ENCODE measurements at regions of chr16 and their contacts with region 1.

Region 1: GRCh38 chr16:1308977-1309885 is at the start of gene UBE2I:
- DNase-seq: peak; percentile 98
- H3K4me3 Mint-ChIP-seq: peak within 1 kb of the TSS; percentile 92
- H3K27ac Mint-ChIP-seq: peak within 1 kb of the TSS; percentile 99
- H3K4me1 Mint-ChIP-seq: peaks cover 12% of the 10 kb centered on the region
- H3K27me3 Mint-ChIP-seq: no peaks in the 10 kb centered on the region
- total RNA-seq, gene UBE2I: 264 and 265 TPM in 2 replicates

Region 2: GRCh38 chr16:1342526-1343427 is 33.5 kb after region 1 on chr16:
- intact Hi-C with region 1: no loop called
- DNase-seq: peak; percentile 91
- H3K4me3 Mint-ChIP-seq: peak overlapping the region; percentile 42
- H3K27ac Mint-ChIP-seq: no peak overlapping the region
- H3K4me1 Mint-ChIP-seq: peaks cover 12% of the 10 kb centered on the region
- H3K27me3 Mint-ChIP-seq: no peaks in the 10 kb centered on the region

Region 3: DNA sequence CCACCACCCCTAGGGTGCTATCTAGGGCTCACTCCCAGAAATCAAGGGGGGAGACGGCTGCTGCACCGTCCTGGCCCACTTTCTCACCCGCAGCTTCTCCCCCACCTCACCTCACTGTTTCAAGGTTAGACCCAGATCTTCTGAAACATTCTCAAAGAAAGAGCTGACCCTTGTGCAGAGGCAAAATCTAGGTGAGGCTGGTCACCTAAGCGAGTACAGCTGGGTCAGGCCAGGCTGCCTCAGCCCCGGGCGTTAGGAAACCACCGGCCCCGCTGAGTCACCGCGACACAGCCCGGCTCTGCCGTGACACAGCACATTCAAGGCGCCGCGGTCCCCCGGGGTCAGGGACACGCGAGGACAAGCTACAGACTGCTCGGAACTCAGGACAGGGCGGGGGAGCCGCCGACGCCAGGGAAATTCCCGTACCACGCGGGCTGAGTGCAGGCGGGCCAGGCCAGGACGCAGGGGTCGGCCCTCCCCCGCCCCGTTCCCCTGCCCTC is 69.6 kb after region 1 on chr16:
- intact Hi-C with region 1: loop called (anchors 2 kb)
- DNase-seq: peak; percentile 56
- H3K4me3 Mint-ChIP-seq: peak overlapping the region; percentile 88
- H3K27ac Mint-ChIP-seq: peak overlapping the region; percentile 88
- H3K4me1 Mint-ChIP-seq: peaks cover 12% of the 10 kb centered on the region
- H3K27me3 Mint-ChIP-seq: no peaks in the 10 kb centered on the region

Region 4: GRCh38 chr16:1428511-1428910 is 119.3 kb after region 1 on chr16:
- intact Hi-C with region 1: loop called (anchors 10 kb)
- DNase-seq: peak; percentile 36
- H3K4me3 Mint-ChIP-seq: no peak overlapping the region
- H3K27ac Mint-ChIP-seq: no peak overlapping the region
- H3K4me1 Mint-ChIP-seq: no peaks in the 10 kb centered on the region
- H3K27me3 Mint-ChIP-seq: no peaks in the 10 kb centered on the region

Region 5: DNA sequence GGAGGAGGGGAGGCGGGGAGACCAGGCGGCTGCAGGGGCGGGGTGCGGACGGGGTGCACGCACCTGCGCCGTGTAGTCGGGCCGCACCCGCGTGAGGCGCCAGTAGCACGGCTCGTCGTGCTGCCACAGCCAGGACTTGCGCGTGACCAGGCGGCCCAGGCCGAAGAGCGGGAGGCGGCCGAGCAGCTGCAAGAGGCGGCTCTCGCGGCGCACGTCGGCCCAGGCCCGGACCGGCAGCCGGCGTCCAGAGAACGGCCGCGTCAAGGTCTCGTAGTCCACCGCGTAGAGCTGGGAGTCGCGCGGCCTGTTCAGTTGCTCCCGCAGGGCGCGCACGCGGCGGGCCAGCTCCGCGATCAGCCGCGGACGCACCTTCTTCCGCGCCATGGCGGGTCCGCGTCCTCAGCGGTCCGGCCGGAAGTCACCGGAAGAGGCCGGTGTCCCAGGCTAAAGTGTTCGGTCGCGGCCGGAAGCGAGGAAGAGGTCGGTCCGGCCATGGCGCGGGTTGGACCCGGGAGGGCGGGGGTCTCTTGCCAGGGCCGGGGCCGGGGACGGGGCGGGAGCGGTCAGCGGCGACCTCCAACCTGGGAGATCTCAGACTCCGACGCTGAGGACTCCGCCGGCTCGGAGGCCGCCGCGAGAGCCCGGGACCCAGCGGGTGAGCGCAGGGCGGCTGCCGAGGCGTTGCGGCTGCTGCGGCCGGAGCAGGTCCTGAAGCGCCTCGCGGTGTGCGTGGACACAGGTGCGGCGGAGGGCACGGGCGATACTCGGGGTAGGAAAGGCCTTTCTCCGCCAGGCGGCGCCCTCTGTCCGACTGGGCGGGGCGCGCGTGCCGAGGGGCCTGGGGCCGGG is 463.7 kb after region 1 on chr16 and contains the starts of genes EME2 and MRPS34:
- intact Hi-C with region 1: loop called (anchors 10 kb)
- DNase-seq: peak; percentile 80
- H3K4me3 Mint-ChIP-seq: peak within 1 kb of the TSS; percentile 96
- H3K27ac Mint-ChIP-seq: peak within 1 kb of the TSS; percentile 96
- H3K4me1 Mint-ChIP-seq: peaks cover 10% of the 10 kb centered on the region
- H3K27me3 Mint-ChIP-seq: no peaks in the 10 kb centered on the region
- total RNA-seq, gene EME2: 26.1 and 26.2 TPM in 2 replicates
- total RNA-seq, gene MRPS34: 179 and 184 TPM in 2 replicates